AG04449 (cell line): ENCODE measurements at regions of chr1 and their contacts with region 1.

Region 1: DNA sequence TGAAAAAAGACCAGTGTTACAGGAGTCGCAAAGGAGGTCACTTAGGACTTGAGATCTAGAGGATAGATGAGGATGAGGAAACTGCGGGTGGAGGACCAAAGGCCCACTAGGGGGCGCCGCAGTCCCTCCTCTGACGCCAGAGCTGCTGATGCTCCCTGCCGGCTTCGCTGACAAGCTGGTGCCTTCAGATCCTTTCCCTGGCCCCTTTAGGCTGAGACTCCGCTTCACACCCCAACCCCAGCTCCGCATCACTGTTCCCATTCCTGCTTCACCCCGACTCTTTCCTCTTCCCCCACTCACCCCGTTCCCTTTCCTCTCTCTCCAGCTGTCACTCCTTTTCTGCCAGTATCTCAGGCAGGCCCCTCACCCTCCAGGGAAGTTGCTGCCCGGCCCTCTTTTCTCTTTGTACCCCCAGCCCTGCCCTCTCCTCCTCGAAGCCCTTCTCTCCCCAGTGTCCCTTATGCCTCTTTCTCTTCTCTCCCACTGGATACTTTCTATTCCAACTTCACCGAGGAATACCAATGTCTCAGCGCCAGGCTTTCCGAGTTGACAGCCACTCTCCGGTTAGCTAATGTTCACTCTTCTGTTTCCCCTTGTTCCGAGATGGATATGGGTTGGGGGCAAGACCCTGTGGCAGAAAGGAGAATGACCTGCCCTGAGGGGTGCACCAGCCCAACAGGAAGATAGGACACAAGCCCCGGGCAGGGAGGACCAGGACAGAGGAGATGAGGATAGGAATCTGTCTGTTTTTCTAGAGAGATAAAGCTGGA is 4.5 kb downstream of the KCNJ9 start:
- DNase-seq: no peak
- H3K4me3 ChIP-seq: no peak overlapping the region
- CTCF ChIP-seq: peak; percentile 91

Region 2: GRCh38 chr1:159879977-159880376 is 205.9 kb before region 1 on chr1:
- CTCF ChIA-PET with region 1: no interaction called
- POLR2A ChIA-PET with region 1: no interaction called
- DNase-seq: no peak
- H3K4me3 ChIP-seq: no peak overlapping the region
- CTCF ChIP-seq: no peak

Region 3: DNA sequence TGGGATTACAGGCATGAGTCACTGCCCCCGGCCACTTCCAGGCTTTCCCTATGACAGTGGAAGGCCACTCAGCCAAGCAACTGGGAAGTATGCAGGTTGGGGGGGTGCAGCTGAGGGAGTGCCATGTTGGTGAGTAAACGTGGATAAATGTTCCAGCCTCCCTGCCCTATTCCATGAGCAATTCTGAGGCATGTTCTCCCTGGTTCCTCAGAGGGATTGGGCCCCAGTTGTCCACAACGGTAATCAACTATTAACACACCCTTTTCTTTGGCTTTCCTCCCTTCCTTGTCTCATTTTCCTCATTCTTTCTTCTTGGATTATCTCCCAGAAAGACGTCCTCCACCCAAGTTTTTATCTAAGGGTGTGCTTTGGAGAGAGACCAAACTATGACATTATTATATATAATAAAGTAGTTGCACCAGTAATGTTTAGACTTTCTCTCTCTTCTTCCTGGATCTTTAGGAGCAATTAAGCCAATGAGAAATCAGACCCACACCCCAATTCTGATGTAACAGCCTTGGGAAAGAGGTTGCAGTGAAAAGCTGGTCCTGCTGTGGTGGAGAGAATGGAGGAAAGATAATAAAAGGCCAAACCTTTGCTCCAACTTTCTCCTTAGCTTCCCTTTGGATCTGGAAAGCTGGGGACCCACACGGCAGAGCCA is 125.0 kb before region 1 on chr1:
- CTCF ChIA-PET with region 1: no interaction called
- POLR2A ChIA-PET with region 1: no interaction called
- DNase-seq: peak; percentile 41
- H3K4me3 ChIP-seq: peak overlapping the region; percentile 26
- CTCF ChIP-seq: no peak

Region 4: DNA sequence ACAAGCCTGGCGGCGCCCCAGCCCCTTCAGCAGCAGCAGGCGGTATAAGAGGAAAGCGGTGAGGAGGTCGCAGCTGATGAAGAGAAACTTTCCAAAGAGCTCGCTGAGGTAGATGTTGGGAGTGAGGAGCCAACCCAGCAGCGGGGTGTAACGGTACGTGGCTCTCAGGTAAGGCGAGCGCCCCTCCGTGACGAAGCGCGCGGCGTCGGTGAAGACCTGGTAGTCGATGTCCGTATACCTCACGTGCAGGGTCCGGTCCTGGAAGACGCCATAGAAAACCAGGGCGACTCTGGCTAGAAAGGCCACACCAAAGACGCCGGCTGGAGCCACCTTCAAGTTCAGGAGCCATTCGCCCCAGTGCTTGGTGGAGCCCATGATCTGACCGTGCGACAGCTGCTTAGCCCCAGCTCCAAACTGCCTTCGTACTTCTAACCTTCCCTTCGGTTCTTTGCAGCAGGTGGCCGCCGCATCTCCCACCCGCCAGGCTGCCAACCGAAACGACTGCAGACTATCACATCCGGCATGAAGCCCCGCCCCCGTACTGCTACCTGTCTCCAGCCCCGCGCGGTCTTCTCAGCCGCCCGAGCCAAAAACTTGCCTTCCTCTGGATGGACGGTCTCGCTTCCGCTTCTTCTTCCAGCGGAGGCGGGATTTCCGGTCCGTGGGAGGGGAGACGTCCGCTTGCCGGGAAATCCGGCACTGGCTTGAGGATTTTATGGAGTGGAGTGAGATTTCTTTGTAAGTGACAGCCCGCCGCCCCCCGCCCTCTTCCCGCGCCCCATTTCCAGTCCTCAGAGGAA is 54.3 kb before region 1 on chr1 and contains the start of gene PIGM:
- CTCF ChIA-PET with region 1: interaction called, 13 read pairs
- POLR2A ChIA-PET with region 1: no interaction called
- DNase-seq: peak; percentile 38
- H3K4me3 ChIP-seq: peak within 1 kb of the TSS; percentile 88
- CTCF ChIP-seq: no peak

Region 5: DNA sequence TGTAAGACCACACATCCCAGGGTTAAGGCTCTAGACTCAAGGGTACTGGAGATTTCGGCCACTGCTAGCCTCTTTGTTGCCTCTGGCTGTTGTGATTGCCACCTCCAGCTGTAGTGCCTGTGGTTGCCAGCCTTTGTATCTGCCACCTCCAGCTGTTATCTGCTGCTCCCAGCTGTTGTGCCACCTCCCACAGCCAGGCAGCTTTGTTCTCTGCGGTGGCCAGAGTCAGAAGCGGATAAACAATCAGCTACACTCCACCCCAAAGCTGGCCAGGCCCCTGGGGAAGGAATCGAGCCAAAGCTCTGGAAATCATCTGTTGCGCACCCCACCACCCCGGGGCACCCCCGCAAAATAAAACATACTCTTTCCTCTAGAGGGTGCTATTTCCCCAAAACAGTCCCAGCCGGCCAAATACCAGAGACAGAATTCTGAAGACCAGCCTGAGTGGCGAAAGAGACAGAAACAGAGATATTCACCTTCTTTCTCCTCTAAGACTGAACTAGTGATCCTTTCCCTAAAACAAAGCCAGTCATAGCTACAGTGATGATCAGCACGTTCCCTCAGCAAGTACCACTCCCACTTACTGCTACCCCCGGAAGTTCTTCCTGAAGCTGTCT is 39.3 kb before region 1 on chr1:
- CTCF ChIA-PET with region 1: interaction called, 94 read pairs
- POLR2A ChIA-PET with region 1: no interaction called
- DNase-seq: no peak
- H3K4me3 ChIP-seq: peak overlapping the region; percentile 15; the same call in 1 of the 2 replicates
- CTCF ChIP-seq: peak; percentile 39

Region 6: GRCh38 chr1:160058087-160058486 is 27.8 kb before region 1 on chr1:
- CTCF ChIA-PET with region 1: interaction called, 58 read pairs
- POLR2A ChIA-PET with region 1: no interaction called
- DNase-seq: no peak
- H3K4me3 ChIP-seq: no peak overlapping the region
- CTCF ChIP-seq: peak; percentile 24

Region 7: GRCh38 chr1:160070243-160071163 is 15.4 kb before region 1 on chr1:
- CTCF ChIA-PET with region 1: interaction called, 116 read pairs
- POLR2A ChIA-PET with region 1: no interaction called
- DNase-seq: no peak
- H3K4me3 ChIP-seq: peak overlapping the region; percentile 61
- CTCF ChIP-seq: no peak

Region 8: DNA sequence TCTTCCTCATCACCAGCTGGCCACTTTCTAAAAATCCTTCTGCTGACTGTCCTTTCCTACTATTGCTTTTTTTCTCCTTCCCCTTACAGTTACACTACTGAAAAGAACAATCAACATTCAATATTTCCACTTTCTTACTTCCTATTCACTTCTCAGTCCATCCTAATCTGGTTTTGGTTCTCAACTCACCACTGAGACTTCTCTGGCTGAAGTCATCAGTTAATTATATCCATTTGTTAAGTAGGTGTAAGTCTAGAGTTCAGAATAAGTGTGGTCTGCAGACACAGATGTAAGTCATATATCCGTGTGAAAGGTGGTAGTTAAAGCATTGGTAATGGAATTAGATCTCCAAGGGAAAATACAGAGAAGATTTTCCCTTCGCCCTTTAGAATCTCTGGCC is 140.8 kb after region 1 on chr1:
- CTCF ChIA-PET with region 1: interaction called, 62 read pairs
- POLR2A ChIA-PET with region 1: no interaction called
- DNase-seq: no peak
- H3K4me3 ChIP-seq: no peak overlapping the region
- CTCF ChIP-seq: no peak

Region 9: DNA sequence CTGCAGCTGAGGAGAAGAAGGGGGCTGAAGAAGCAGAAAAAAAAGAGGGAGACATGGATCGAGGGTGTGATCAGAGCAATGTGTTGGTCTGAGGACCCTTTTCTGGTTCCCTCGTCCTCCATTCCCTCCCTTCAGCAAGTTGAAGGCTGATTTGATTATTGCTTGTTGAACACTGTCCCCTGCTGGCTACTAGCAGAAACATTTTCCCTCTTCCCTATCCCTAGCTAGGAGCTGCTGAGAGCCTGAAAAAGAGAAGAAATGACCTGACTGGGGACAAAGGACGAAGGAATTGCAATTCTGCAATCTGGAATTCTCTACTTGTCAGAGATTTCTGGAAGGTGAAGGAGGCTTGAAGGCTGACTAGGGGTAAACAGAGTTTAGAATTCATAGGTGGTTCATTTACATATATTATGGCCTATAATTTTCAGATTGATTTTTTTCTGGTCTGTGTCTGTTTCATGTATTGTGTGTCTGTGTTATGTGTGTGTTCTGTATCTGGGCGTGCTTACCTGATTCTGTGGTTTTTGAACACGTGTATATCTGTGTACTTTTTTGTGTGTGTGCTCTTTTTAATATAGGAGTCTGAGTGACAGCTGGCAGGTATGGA is 290.8 kb after region 1 on chr1:
- CTCF ChIA-PET with region 1: interaction called, 67 read pairs
- POLR2A ChIA-PET with region 1: no interaction called
- DNase-seq: no peak
- H3K4me3 ChIP-seq: no peak overlapping the region
- CTCF ChIP-seq: peak; percentile 84